ENCODE measurements at regions of chr3 and their contacts with region 1.

Region 1: DNA sequence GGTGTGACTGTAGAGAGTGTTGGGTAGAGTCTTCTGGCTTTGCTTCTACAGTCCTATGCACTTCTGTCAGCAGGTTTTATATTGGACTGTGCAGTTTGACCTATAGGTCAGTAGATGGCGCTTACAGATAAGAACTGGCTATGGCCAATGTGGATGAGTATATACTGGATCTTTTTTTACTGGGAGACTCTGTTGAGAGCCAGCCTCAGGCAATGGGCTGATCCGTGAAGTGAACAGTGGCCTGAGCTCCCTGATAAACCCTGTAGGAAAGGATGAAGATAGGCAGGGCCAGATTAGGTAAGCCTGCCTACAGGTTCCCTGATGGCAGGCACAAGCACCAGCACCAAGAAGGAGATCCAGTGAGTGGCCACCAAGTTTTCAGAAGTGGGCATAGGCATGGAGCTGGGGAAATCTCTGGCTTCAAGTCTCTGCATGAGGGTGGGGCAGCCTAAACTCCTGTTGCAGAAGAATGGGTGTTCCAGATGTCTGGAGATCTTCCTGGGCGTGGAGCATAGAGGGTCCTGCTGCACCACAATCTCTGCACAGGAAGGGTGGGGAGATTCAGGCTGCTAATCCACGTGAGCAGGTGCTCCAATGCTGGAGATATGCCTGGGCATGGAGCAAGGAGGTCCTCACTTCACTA is 326.0 kb upstream of the SGO1 start:
- DNase-seq: peak; percentile 3
- H3K4me3 ChIP-seq: no peak overlapping the region
- H3K27ac ChIP-seq: no peak overlapping the region
- H3K27me3 ChIP-seq: no peaks in the 10 kb centered on the region
- CTCF ChIP-seq: peak; percentile 71

Region 2: GRCh38 chr3:21466476-21466875 is 954.5 kb after region 1 on chr3:
- CTCF ChIA-PET with region 1: no interaction called
- POLR2A ChIA-PET with region 1: no interaction called
- DNase-seq: no peak
- H3K4me3 ChIP-seq: no peak overlapping the region
- H3K27ac ChIP-seq: no peak overlapping the region
- H3K27me3 ChIP-seq: no peaks in the 10 kb centered on the region
- CTCF ChIP-seq: no peak

Region 3: DNA sequence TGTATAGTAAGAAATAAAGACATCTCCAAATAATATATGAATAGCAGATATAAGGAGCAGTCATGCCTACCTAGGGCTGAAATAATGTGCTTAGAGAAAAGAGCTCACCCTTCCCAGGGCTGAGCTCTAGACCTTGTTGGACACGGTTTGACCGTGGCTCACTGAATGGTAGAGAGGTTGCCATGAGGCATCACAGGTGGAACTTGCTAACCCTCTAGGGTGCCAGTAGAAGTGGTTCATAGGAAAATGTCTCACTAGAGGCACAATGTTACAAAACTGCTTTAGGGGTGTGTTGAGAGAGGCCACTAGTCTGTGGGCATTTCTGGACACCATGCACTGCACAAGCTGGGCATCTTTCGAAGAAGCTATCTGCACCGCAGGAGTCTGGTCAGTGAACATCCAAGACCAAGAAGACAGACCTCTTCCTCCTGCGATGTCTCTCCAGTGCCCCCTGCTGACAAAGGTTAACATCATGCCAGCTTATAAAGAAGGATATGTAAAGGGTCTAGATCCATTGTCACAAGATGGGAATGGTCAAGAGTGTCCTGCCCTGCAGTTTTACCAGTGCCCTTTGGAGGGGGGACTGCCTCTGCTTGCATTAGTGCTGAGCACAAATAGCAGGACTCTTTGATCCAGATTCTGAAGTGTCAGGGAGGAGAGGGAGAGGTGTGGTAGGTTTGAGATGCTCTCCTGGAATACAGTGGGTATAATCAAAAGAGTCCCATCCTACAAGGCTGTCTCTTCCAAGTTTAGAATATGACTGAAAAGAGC is 972.3 kb after region 1 on chr3:
- CTCF ChIA-PET with region 1: interaction called, 13 read pairs
- POLR2A ChIA-PET with region 1: no interaction called
- DNase-seq: peak; percentile 34
- H3K4me3 ChIP-seq: no peak overlapping the region
- H3K27ac ChIP-seq: no peak overlapping the region
- H3K27me3 ChIP-seq: no peaks in the 10 kb centered on the region
- CTCF ChIP-seq: peak; percentile 77

Measured in AG04450 (cell line).